Sciatic nerve (tissue), 2 donors: ENCODE measurements at regions of chr13 and their contacts with region 1.

Region 1: DNA sequence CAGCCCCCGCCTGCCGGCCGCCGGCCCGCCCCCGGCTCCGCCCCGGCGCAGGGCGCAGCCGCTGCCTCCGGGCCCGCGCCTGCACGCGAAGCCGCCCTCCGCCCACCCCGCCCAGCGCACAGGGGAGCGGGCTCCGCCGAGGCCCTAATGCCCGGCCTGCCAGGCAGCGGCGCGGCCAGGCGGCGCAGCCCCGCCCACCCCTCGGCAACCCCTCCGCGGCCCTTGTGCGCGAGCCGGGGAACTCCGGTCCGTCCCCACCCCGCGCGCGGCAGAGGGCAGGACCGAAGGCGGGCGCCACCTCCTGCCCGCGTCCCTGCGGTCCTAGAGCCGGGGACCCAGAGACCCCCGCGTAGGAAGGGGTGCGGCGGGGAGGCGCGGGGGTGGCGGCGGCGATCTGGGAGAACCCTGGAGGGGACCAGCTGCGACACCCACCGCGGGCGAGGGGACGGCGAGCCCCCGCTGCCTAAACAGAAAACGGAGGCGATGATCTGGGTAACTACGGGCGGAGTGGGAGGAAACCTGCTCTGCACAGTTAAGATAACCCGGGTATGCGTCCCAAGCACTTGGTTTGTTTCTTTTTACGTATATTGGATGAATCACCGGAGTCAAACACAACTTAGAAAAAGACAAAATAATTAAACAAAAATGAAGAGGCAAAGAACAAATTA is 350 bp upstream of the USP12 start:
- DNase-seq: peak; percentile 93
- ATAC-seq: peak; percentile 96

Region 2: DNA sequence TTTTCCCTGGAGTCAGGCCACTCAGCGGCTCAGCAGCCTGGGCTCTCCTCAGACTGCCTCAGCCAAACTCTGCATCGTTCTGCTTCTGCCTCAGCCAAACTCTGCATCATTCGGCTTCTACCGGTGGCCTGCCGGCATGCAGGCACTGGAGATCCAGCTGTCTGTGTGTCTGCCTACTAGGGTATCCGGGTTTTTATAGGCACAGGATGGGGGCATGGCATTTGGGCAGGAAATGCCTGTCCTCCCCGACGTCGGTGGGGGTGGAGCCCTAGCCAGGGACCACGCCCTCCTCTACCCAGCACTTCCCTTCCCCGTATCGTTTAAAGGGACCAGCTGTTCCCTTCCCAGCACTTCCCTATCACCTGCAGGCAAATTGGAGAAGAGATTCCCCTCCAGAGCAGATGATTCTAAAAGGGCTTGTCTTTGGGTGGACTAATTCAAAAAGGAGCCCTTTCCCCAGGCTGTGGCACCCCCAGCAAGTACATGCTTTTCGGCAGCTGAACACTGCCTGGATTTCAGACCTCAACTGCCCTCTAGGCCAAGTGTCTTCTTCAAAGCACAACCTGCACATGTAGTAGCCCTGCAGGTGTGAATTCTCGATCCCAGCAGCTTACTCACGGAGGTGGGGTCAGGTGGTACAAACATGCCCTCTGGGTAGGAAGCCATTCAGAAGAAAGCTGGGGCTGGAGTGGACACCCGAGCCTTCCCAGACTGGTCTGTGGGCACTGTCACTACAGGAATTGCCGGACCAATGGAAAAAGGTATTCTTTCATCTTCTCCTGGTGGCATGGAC is 385.9 kb before region 1 on chr13:
- intact Hi-C with region 1: no loop called
- DNase-seq: no peak
- ATAC-seq: peak; percentile 50

Region 3: DNA sequence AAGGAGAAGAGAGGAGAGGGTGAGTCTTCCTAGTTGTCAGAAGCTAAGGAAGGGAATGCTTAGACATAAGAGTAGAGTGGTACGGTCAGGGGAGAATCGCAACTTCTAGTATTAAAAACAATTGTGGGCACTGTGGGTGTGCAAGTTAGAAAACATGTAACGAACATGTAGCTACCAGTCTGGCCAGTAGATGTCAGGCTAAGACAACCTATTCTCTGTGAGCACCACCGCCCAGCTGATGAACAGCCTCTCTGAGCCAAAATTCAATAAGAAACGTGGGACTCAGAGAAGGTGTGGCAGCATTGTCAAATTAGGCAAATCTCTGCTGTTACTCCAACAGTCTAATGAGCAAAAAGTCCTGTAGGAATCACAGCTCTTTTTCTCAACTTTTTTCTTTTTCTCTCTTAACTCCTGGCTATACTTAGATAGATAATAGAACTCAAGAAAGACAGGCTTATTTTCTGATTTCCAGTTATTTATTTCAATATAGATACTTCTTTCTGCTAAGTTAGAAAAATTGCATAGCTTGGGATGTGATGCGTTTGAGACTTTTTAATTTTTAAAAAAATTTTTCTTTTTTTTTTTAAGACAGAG is 186.6 kb before region 1 on chr13:
- intact Hi-C with region 1: loop called (anchors 5 kb)
- DNase-seq: peak; percentile 75
- ATAC-seq: peak; percentile 83

Region 4: GRCh38 chr13:27203854-27204253 is 31.9 kb after region 1 on chr13:
- intact Hi-C with region 1: no loop called
- DNase-seq: no peak
- ATAC-seq: no peak

Region 5: GRCh38 chr13:27251166-27252091 is 79.5 kb after region 1 on chr13 and contains the start of gene RPL21:
- intact Hi-C with region 1: loop called (anchors 10 kb)
- DNase-seq: peak; percentile 97
- ATAC-seq: peak; percentile 99
- total RNA-seq, gene RPL21: 877 TPM